PC-9 (cell line): ENCODE measurements at regions of chr9 and their contacts with region 1.

Region 1: DNA sequence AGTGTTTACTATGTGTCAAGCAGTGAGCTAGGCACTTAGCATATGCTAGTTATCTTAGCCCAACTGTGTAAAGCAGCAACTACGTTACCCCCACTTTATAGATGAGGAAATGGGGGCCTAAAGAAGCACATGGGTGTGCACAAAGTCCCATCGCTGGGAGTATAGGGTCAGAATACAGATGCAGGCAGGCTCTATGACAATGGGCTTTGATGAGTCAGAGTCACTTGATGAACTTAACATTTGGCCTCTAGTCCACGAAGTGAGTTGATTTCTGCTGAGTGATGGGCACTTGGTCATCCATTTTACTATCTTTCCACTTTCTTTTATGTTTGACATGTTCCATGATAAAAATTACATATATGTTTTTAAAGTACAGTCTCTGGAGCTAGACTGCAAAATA is 204.3 kb downstream of the TRIM32 start:
- DNase-seq: no peak
- H3K4me3 ChIP-seq: no peak overlapping the region
- H3K27ac ChIP-seq: no peak overlapping the region
- H3K4me1 ChIP-seq: 0 out of 2 replicates have a peak, but pooled peaks cover 15% of the 10 kb centered on the region
- H3K27me3 ChIP-seq: no peaks in the 10 kb centered on the region
- CTCF ChIP-seq: no peak

Region 2: DNA sequence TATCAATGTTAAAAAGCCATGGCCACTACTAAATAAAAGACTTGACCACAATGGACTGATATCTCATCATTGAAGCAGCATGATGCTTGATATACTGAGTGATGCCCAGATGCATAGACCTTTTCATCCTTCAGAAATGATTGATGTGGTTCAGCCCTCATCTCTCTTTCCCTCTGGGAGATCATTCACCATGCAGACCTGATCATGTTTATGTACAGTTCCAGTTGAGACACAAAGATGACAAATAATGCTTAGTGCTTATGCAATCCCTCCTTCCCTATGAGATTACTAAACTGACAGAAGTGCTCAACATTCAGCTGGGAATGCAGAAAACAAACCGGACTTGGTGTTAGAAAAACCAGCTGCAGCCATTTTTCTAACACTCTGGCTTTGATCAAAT is 720.9 kb after region 1 on chr9:
- CTCF ChIA-PET with region 1: interaction called, 10 read pairs
- POLR2A ChIA-PET with region 1: no interaction called
- intact Hi-C with region 1: no loop called
- DNase-seq: no peak
- H3K4me3 ChIP-seq: no peak overlapping the region
- H3K27ac ChIP-seq: no peak overlapping the region
- H3K4me1 ChIP-seq: no peaks in the 10 kb centered on the region
- H3K27me3 ChIP-seq: no peaks in the 10 kb centered on the region; the same call in 1 of the 2 replicates
- CTCF ChIP-seq: no peak